Activated CD4-positive, alpha-beta memory T cell treated with anti-CD3 and anti-CD28 coated beads, Interleukin-2, amount 10 ng/mL, durations not matched to agents 7 days and 5 days (primary cell): ENCODE measurements at regions of chr9 and their contacts with region 1.

Region 1: GRCh38 chr9:76658535-76659231 is 105.6 kb upstream of the PCA3 start:
- DNase-seq: no peak
- H3K4me3 Mint-ChIP-seq: no peak overlapping the region
- H3K27ac Mint-ChIP-seq: no peak overlapping the region
- H3K4me1 Mint-ChIP-seq: peaks cover 50% of the 10 kb centered on the region
- H3K27me3 Mint-ChIP-seq: no peaks in the 10 kb centered on the region

Region 2: DNA sequence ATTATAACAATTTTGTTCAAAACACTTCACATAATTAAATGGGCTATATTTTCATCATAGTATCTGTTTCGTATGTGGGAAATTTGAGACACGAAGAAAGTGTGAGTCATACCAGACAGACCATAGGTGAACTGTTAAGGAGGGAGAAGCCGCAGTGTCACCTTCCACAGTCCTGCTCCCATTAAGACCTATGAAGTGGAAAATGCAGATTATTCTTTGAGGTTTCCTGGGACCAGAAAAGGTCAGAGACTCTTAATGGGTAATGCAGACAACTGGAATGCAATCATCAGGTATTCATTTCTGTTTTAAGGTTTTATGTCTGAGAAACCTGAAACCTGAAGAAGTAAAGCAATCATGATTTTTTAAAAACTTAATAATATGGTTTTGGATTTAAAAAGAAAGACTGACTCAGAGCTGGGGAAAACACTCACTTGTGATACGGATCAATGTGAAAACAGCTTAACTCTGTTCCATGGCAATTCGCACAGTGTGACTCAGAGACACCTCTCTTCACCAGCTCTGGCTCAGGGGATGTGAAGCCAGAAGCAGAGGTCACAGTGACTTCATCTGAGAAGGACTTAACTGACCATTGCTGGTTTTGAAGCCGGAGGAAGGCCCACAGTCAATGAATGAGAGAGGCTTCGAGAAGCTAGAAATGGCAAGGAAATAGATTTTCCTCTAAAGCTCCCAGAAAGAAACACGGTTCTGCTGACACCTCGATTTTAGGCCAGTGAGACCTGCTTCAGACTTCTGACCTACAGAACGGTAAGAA is 216.9 kb before region 1 on chr9:
- CTCF ChIA-PET with region 1: interaction called, 69 read pairs
- POLR2A ChIA-PET with region 1: interaction called, 4 read pairs
- DNase-seq: peak; percentile 49
- H3K4me3 Mint-ChIP-seq: peak overlapping the region; percentile 57
- H3K27ac Mint-ChIP-seq: peak overlapping the region; percentile 80
- H3K4me1 Mint-ChIP-seq: peaks cover 65% of the 10 kb centered on the region
- H3K27me3 Mint-ChIP-seq: no peaks in the 10 kb centered on the region